Colonic mucosa (tissue), 4 donors: ENCODE measurements at regions of chr17 and their contacts with region 1.

Region 1: DNA sequence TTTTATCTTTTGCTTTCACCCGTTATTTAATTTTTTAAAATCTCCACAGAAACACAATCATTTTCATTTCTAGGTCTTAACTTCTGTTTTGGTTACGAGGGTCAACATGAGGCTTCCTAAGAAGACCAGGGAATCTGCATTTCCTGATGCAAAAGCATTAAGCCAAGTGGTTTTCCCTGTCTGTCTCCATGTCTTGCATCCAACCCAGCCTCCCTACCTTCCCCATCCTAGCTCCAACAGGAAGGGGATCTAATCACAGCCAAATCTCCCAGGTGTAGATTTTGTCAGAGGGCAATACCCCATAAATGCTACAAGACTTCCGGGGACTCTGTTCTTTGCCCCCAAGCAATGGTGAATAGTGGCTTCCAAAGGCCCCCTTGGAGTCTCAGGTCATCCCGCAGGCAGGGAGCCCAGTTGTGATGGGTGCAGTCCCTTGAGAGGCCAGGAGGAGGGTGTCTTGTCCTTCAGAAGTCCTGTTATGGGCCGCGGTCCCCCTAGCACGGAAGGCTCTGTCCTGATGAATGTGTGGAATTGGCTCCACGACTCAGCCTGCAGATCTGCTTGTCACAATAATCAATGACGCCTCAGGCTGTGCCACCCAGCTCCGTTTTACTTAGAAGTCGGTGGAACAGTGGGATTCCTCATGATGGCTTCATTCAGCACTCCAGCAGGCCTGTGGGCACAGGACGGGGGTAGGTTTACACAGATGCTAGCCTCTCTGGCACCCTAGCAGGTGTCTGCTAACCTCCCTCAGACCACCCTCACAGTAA is 141.1 kb downstream of the RGS9 start:
- DNase-seq: peak; percentile 80
- H3K4me3 ChIP-seq: no peak overlapping the region
- H3K27ac ChIP-seq: no peak overlapping the region
- H3K4me1 ChIP-seq: no peaks in the 10 kb centered on the region
- H3K27me3 ChIP-seq: no peaks in the 10 kb centered on the region
- CTCF ChIP-seq: peak; percentile 65

Region 2: GRCh38 chr17:65228734-65229620 is 49.3 kb before region 1 on chr17:
- intact Hi-C with region 1: no loop called
- DNase-seq: no peak
- H3K4me3 ChIP-seq: no peak overlapping the region
- H3K27ac ChIP-seq: no peak overlapping the region
- H3K4me1 ChIP-seq: no peaks in the 10 kb centered on the region
- H3K27me3 ChIP-seq: no peaks in the 10 kb centered on the region
- CTCF ChIP-seq: no peak

Region 3: DNA sequence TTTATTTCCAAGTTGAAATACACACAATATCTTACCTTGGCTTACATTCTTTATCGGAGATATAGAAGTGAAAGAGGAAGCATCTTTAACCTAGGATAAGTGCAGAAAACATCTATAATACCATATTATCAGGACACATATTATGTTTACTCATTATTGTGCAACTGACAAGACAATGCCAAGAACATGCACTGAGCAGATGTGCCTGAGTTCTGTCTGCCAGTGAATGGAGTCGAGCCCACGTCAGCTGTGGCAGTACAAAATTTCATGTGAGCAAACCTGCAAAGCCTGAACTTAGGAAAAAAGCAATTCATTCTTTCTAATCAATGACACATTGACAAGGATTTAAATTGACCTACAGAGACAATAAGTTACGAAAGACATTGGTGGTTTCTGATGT is 128.8 kb after region 1 on chr17:
- intact Hi-C with region 1: no loop called
- DNase-seq: no peak
- H3K4me3 ChIP-seq: no peak overlapping the region
- H3K27ac ChIP-seq: no peak overlapping the region
- H3K4me1 ChIP-seq: peaks cover 6% of the 10 kb centered on the region
- H3K27me3 ChIP-seq: no peaks in the 10 kb centered on the region
- CTCF ChIP-seq: no peak

Region 4: DNA sequence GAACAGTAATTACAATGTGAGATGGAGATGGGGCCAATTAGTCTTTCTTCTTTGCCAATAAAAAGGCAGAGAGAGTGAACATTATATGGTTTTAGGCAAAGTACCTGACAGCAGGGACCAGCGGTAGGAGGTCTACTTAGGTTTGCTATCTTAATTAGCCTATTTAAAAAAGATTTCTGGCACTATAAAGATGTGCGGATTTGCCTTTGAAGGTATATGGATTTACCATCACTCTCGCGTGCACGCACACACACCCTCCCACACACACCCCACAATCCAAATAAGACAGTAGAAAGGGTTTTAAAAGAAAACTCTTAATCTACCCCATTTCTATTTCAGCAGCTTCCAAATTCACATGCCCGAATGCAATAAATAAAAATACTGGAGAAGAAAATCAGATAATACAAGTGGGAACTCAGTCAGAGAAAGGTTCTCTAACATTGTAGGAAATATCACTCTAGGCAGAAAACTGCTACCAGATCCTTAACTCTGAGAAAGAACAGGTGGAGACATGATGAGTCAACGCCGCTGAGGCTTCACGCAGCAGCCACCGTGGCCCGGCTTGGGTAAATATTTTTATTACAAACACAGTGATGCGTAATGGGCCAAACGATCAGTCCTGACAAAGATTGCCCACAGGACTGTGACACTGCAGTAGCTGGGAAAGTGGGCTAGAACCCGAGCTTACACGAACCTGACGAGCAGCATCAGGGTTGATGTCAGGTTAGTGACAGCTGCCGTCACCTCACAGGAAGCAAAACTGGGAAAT is 349.8 kb after region 1 on chr17:
- intact Hi-C with region 1: loop called (anchors 10 kb)
- DNase-seq: peak; percentile 79
- H3K4me3 ChIP-seq: no peak overlapping the region
- H3K27ac ChIP-seq: peak overlapping the region; percentile 8
- H3K4me1 ChIP-seq: peaks cover 3% of the 10 kb centered on the region
- H3K27me3 ChIP-seq: no peaks in the 10 kb centered on the region
- CTCF ChIP-seq: no peak

Region 5: GRCh38 chr17:65794572-65794971 is 516.3 kb after region 1 on chr17:
- intact Hi-C with region 1: loop called (anchors 5 kb)
- DNase-seq: peak; percentile 39
- H3K4me3 ChIP-seq: no peak overlapping the region
- H3K27ac ChIP-seq: no peak overlapping the region
- H3K4me1 ChIP-seq: no peaks in the 10 kb centered on the region
- H3K27me3 ChIP-seq: no peaks in the 10 kb centered on the region
- CTCF ChIP-seq: peak; percentile 40

Region 6: GRCh38 chr17:65988081-65988850 is 710.0 kb after region 1 on chr17:
- intact Hi-C with region 1: loop called (anchors 5 kb)
- DNase-seq: peak; percentile 49
- H3K4me3 ChIP-seq: no peak overlapping the region
- H3K27ac ChIP-seq: no peak overlapping the region
- H3K4me1 ChIP-seq: no peaks in the 10 kb centered on the region
- H3K27me3 ChIP-seq: no peaks in the 10 kb centered on the region
- CTCF ChIP-seq: peak; percentile 52

Region 7: GRCh38 chr17:66165513-66166123 is 887.4 kb after region 1 on chr17:
- intact Hi-C with region 1: loop called (anchors 5 kb)
- DNase-seq: no peak
- H3K4me3 ChIP-seq: no peak overlapping the region
- H3K27ac ChIP-seq: no peak overlapping the region
- H3K4me1 ChIP-seq: no peaks in the 10 kb centered on the region
- H3K27me3 ChIP-seq: no peaks in the 10 kb centered on the region
- CTCF ChIP-seq: peak; percentile 59